ENCODE measurements at regions of chr2 and their contacts with region 1.

Region 1: GRCh38 chr2:30711646-30712085 is 95.6 kb downstream of the CAPN13 start:
- H3K4me3 ChIP-seq: no peak overlapping the region
- H3K27ac ChIP-seq: no peak overlapping the region
- H3K4me1 ChIP-seq: no peaks in the 10 kb centered on the region
- CTCF ChIP-seq: peak; percentile 89

Region 2: DNA sequence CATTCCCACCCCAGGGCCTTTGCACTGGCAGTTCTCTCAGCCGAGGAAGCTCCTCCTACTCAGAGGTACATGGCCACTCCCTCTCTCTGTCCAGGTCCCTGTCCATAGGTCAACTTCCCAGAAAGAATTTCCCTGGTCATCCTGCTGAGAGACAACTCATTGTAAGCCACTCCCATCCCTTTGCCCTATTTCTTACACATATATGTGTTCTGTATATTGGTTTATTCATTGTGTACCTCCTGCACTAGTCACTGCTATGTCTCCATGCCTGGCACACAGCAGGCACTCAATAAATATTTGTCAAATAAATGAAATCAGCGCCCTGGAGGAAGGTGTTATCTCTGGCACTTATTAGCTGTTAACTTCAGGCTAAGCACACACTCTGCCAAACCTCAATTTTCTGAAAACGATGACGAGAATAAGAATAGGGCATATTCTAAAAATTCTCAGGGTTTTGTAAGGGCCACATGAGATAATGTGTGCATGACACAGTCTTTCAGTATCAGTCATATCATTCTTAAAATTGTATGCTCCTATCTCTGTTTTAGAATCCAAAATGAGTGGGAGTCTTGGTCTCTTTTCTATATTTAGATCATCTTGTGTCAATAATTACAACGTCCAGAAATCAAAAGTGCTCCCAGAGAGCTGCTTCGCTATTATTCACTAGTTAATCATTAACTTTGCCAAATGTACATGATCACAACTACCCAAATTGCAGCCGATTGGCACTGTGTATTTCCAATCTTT is 988.2 kb before region 1 on chr2:
- CTCF ChIA-PET with region 1: no interaction called
- POLR2A ChIA-PET with region 1: no interaction called
- H3K4me3 ChIP-seq: no peak overlapping the region
- H3K27ac ChIP-seq: no peak overlapping the region
- H3K4me1 ChIP-seq: no peaks in the 10 kb centered on the region
- CTCF ChIP-seq: no peak

Region 3: DNA sequence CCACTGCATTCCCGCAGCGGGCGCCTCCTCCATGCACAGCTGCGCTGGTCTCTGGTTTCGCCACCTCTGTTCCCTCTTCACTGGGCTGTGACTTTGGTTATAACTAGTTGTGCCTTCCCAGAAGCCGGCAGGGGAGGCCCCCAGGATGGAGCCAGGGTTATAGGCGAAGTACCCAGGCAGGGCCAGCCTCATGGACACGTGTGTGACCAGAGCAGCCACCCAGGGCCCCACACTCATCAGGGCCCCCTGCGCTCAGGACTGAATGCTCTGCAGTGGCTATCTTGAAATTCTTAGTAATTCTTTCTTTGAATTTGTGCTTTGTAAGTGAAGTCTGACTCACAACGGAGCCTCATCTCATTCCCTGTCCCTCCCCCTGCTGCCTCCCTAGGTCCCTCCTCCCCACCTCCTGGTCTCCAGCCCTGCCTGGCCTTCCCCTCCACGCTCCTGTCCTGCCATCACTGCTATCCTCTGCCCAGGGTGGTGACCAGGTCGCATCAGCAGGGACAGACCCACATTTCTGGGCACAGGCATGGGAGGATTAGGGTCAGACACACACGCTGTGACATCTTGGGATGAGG is 518.5 kb before region 1 on chr2:
- CTCF ChIA-PET with region 1: interaction called, 15 read pairs
- POLR2A ChIA-PET with region 1: no interaction called
- H3K4me3 ChIP-seq: no peak overlapping the region
- H3K27ac ChIP-seq: no peak overlapping the region
- H3K4me1 ChIP-seq: no peaks in the 10 kb centered on the region
- CTCF ChIP-seq: no peak

Region 4: DNA sequence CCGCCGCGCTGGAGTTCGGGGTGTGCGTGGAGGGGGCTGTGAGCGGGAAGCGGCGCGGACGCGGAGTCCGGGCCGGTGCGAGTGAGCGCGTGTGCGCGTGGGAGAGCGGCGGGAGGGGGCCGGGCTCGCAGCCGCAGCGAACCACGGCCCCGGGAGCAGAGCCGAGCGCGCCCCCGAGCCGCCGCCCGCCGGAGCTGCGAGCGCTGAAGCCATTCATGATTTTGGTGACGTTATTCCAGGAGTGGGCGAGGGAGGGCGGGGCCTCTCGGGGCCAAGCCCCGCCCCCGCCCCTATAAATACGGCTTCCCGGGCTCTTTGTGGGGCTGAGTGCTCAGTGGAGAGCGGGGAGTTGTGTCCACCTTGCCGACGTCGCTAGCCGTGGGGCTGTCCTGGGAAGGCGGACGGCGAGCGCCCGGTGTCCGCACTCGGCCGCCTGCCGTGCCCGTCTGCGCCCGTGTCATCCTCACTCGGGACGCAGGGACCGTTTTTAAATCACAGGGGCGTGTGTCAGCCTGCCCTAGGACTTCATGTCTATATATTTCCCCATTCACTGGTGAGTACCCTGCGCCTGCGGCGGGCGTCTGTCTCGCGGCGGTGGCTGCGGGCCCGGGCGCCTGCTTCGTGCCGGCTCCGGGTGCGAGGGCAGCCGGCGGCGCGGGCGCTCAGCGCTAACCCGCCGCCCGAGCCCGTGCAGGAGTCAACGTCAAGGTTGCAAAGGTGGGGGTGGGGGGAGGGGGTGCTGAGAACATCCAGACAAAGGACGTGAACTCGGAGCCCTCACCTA is 480.3 kb before region 1 on chr2 and contains the start of gene LBH:
- CTCF ChIA-PET with region 1: interaction called, 13 read pairs
- POLR2A ChIA-PET with region 1: interaction called, 7 read pairs
- H3K4me3 ChIP-seq: peak within 1 kb of the TSS; percentile 76
- H3K27ac ChIP-seq: peak within 1 kb of the TSS; percentile 76
- H3K4me1 ChIP-seq: peaks cover 8% of the 10 kb centered on the region
- CTCF ChIP-seq: no peak

Region 5: DNA sequence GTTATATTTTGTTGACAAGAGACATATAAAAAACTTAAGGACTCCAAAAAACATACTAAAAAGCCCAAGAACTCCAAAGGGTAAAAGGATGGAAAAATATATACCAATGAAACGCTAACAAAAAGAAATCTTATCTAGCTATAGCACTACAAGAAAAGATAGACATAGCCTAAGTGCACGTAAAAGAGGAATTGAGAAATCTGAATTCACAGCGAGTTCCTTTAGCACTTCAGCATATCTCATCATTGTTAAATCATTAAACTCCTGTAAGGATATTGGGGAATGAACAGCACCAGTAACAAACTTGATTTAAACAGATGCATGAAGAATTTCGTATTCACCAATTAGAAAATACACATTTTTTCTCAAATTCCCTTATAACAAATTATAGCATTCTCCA is 38.5 kb before region 1 on chr2:
- CTCF ChIA-PET with region 1: no interaction called
- POLR2A ChIA-PET with region 1: no interaction called
- H3K4me3 ChIP-seq: no peak overlapping the region
- H3K27ac ChIP-seq: no peak overlapping the region
- H3K4me1 ChIP-seq: no peaks in the 10 kb centered on the region
- CTCF ChIP-seq: no peak

Region 6: GRCh38 chr2:30691948-30692828 is 19.5 kb before region 1 on chr2:
- CTCF ChIA-PET with region 1: interaction called, 43 read pairs
- POLR2A ChIA-PET with region 1: no interaction called
- H3K4me3 ChIP-seq: no peak overlapping the region
- H3K27ac ChIP-seq: no peak overlapping the region
- H3K4me1 ChIP-seq: no peaks in the 10 kb centered on the region
- CTCF ChIP-seq: no peak

Region 7: DNA sequence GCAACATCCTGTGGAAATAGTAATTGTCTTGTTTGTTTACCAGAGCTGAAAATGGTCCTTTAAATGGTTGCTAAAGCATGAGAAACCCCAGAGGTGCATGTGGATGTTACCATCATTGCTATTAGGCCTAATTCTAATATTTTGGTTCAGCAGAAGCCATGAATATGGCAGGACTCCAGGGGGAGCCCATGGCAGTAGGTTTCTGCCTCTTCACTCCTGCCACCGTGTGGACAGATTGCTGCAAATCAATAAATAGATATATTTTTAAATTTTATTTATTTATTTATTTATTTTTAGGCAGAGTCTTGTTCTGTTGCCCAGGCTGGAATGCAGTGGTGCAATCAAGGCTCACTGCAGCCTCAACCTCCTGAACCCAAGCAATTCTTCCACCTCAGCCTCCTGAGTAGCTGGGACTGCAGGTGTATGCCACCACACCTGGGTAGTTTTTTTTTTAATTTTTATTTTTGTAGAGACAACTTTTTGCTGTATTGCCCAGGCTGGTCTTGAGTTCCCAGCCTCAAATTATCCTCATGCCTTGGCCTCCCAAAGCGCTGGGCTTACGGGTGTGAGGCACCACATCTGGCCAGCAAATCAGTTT is 150.5 kb after region 1 on chr2:
- CTCF ChIA-PET with region 1: interaction called, 96 read pairs
- POLR2A ChIA-PET with region 1: no interaction called
- H3K4me3 ChIP-seq: no peak overlapping the region
- H3K27ac ChIP-seq: no peak overlapping the region
- H3K4me1 ChIP-seq: no peaks in the 10 kb centered on the region; the same call in 1 of the 2 replicates
- CTCF ChIP-seq: no peak; the same call in 1 of the 2 replicates

Region 8: GRCh38 chr2:31748041-31748440 is 1036.4 kb after region 1 on chr2:
- CTCF ChIA-PET with region 1: no interaction called
- POLR2A ChIA-PET with region 1: no interaction called
- H3K4me3 ChIP-seq: no peak overlapping the region
- H3K27ac ChIP-seq: no peak overlapping the region
- H3K4me1 ChIP-seq: no peaks in the 10 kb centered on the region
- CTCF ChIP-seq: no peak

Measured in HEK293 (cell line).